CD4-positive, alpha-beta T cell (primary cell): ENCODE measurements at regions of chr18 and their contacts with region 1.

Region 1: DNA sequence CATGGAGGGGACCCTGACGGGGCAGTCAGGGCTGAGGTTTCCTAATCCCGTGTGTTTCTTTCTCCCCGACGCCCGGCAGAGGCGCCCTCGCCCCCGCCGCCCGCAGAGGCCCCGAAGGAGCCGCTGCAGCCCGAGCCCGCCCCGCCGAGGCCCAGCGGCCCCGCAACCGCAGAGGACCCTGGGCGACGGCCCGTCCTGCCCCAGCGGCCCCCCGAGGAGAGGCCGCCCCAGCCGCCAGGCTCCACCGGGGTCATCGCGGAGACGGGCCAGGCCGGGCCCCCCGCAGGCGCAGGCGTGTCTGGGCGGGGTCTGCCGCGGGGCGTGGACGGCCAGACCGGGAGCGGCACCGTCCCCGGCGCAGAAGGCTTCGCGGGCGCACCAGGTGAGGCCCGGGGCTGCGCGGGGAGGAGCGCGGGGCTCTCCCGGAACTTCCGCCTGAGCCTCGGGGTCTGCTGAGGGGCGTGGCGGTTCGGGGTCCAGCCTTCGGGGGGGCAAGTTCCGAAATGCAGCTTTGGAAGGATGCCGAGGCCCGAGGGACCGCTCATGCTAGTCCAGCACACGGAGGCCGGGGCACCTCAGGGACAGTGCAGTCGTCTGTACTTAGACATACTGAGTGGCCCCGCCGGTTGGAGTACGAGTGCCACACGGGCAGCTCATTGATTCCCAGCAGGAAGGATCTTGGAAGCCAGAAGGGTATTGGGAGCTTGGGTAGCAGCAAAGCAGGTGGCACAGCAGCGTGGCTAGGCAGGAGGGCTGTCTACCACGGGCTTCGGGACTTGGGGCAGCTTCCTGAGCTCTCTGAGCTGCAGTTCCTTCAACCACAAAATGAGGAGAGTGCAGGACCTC is 60.1 kb downstream of the EMILIN2 start:
- DNase-seq: peak in 12 of 14 experiments; percentile 22 to 73 (median 46)
- ATAC-seq: peak; percentile 74
- H3K4me3 ChIP-seq: peak overlapping the region; percentile 71
- H3K4me3 Mint-ChIP-seq: peak overlapping the region; percentile 85
- H3K27ac ChIP-seq: peak overlapping the region; percentile 63 to 66
- H3K27ac Mint-ChIP-seq: peak overlapping the region; percentile 78
- H3K4me1 ChIP-seq: peaks cover 23% of the 10 kb centered on the region
- H3K4me1 Mint-ChIP-seq: peaks cover 19% of the 10 kb centered on the region
- H3K27me3 ChIP-seq: no peaks in the 10 kb centered on the region
- H3K27me3 Mint-ChIP-seq: no peaks in the 10 kb centered on the region
- CTCF ChIP-seq: no peak

Region 2: GRCh38 chr18:2805970-2806943 is 100.7 kb before region 1 on chr18:
- CTCF ChIA-PET with region 1: no interaction called
- POLR2A ChIA-PET with region 1: no interaction called
- intact Hi-C with region 1: loop called in 1 of 2 experiments (anchors 5 kb)
- DNase-seq: no peak
- ATAC-seq: no peak
- H3K4me3 ChIP-seq: no peak overlapping the region
- H3K4me3 Mint-ChIP-seq: no peak overlapping the region
- H3K27ac ChIP-seq: no peak overlapping the region
- H3K27ac Mint-ChIP-seq: no peak overlapping the region
- H3K4me1 ChIP-seq: no peaks in the 10 kb centered on the region
- H3K4me1 Mint-ChIP-seq: no peaks in the 10 kb centered on the region
- H3K27me3 ChIP-seq: no peaks in the 10 kb centered on the region
- H3K27me3 Mint-ChIP-seq: no peaks in the 10 kb centered on the region
- CTCF ChIP-seq: no peak